A673 (cell line): ENCODE measurements at regions of chr10 and their contacts with region 1.

Region 1: GRCh38 chr10:116716381-116716780 is 26.0 kb downstream of the HSPA12A start:
- DNase-seq: no peak
- H3K4me3 ChIP-seq: no peak overlapping the region
- H3K27ac ChIP-seq: no peak overlapping the region
- H3K4me1 ChIP-seq: no peaks in the 10 kb centered on the region
- H3K27me3 ChIP-seq: peaks cover 21% of the 10 kb centered on the region
- CTCF ChIP-seq: no peak

Region 2: DNA sequence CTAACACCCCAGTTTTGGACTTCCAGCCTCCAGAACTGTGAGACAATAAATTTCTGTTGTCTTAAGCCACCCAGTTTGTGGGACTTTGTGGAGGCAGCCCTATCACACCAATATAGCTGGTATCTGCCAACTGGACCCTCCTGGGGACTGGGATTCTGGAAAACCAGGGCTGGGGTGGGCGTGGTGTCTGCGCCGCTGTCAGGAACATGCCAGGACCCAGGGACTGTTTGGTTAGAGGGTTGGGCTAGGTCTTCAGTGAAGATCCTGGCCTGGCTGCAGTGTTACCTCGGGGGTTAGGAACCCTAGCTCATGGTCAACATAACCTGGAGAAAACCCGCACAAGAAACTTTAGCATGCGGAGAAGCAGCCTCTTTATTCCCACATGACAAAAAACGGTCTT is 53.0 kb before region 1 on chr10:
- CTCF ChIA-PET with region 1: no interaction called
- POLR2A ChIA-PET with region 1: interaction called, 12 read pairs
- intact Hi-C with region 1: no loop called
- DNase-seq: no peak
- H3K4me3 ChIP-seq: no peak overlapping the region
- H3K27ac ChIP-seq: no peak overlapping the region
- H3K4me1 ChIP-seq: no peaks in the 10 kb centered on the region
- H3K27me3 ChIP-seq: peaks cover 7% of the 10 kb centered on the region
- CTCF ChIP-seq: no peak